Panc1 (cell line): ENCODE measurements at regions of chr2 and their contacts with region 1.

Region 1: GRCh38 chr2:108565778-108566375 is 31.6 kb downstream of the LIMS1 start:
- DNase-seq: no peak
- ATAC-seq: no peak
- H3K4me3 ChIP-seq: no peak overlapping the region
- H3K27ac ChIP-seq: no peak overlapping the region
- H3K4me1 ChIP-seq: peaks cover 14% of the 10 kb centered on the region
- H3K27me3 ChIP-seq: no peaks in the 10 kb centered on the region
- CTCF ChIP-seq: no peak

Region 2: GRCh38 chr2:108029496-108029895 is 536.4 kb before region 1 on chr2:
- CTCF ChIA-PET with region 1: no interaction called
- POLR2A ChIA-PET with region 1: no interaction called
- in situ Hi-C with region 1: no loop called
- intact Hi-C with region 1: no loop called
- DNase-seq: no peak
- ATAC-seq: no peak
- H3K4me3 ChIP-seq: no peak overlapping the region
- H3K27ac ChIP-seq: no peak overlapping the region
- H3K4me1 ChIP-seq: no peaks in the 10 kb centered on the region
- H3K27me3 ChIP-seq: no peaks in the 10 kb centered on the region
- CTCF ChIP-seq: no peak

Region 3: DNA sequence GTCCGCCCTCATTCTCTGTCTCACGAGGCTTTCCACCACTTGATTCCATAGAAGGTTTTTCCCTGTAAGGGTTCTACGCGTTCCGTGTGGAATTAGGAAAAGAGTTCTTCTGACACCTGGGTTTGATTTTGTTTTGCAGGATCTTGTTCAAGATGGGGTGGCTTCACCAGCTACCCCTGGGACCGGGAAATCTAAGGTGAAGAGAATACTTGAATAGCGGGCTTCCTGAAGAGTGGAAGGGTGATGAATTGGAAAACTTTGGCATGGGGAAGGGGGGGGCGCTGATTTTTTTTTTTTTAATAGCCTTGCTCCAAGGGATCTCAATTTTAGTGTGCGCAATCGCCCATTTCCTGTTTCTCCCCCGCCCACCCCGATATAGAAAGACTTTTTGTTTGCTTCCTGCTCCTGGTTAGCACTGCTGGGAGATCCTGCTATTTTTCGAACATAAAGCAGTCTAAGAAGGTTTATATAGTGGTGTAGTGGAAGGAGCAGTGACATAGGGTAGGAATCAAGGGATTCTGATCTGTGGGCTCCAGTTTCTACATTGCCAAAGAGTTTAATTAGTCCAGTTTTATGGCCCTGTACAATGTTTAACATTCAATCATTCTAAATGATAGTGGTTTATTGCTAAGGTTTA is 116.3 kb before region 1 on chr2:
- CTCF ChIA-PET with region 1: no interaction called
- POLR2A ChIA-PET with region 1: no interaction called
- in situ Hi-C with region 1: loop called (anchors 25 kb)
- intact Hi-C with region 1: no loop called
- DNase-seq: no peak
- ATAC-seq: no peak; the same call in 1 of the 2 replicates
- H3K4me3 ChIP-seq: peak overlapping the region; percentile 75 to 97
- H3K27ac ChIP-seq: peak overlapping the region; percentile 94
- H3K4me1 ChIP-seq: peaks cover 6% of the 10 kb centered on the region
- H3K27me3 ChIP-seq: no peaks in the 10 kb centered on the region
- CTCF ChIP-seq: no peak

Region 4: GRCh38 chr2:108542071-108542470 is 23.8 kb before region 1 on chr2:
- CTCF ChIA-PET with region 1: no interaction called
- POLR2A ChIA-PET with region 1: no interaction called
- in situ Hi-C with region 1: no loop called
- intact Hi-C with region 1: loop called (anchors 1 kb)
- DNase-seq: no peak
- ATAC-seq: no peak
- H3K4me3 ChIP-seq: no peak overlapping the region
- H3K27ac ChIP-seq: no peak overlapping the region
- H3K4me1 ChIP-seq: peaks cover 20% of the 10 kb centered on the region
- H3K27me3 ChIP-seq: no peaks in the 10 kb centered on the region
- CTCF ChIP-seq: no peak